Tibial artery (tissue), 4 donors: ENCODE measurements at regions of chr7 and their contacts with region 1.

Region 1: DNA sequence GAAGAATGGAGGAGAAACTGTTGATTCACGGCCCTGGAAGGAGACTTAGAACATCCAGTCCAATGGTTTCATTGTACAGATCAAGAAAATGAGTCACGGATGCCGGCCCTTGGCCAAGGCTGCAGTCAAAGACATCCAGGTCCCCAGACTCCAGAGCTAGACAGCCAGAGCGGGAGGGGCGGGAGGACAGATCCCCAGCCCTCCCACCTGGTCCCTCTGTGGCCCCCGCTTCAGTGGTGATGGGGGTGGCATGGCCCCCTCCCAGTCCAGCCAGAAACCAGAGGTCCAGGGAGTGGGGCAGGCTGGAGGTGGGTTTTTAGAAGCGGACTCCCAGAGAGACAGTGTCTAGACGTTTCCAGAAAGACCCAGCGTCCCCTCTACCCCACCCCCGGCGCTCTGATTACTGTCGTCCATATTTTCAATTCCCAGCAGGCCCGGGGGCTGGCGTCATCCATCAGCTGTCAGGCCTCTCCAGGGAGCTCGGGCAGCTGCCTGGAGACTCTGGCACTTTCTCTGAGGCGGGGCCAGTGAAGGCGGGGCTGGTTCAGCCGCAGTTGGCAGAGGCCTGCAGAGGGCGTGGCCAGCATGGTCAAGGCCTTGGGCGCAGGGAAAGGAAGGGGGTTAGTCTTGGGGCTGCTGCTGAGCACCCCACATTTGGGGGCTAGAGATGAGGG is 8.0 kb upstream of the HSPB1 start:
- DNase-seq: peak; percentile 98 to 99
- H3K4me3 ChIP-seq: peak overlapping the region; percentile 39 to 45
- H3K27ac ChIP-seq: peak overlapping the region; percentile 95 to 100
- H3K4me1 ChIP-seq: peaks cover 27 to 77% (median 58%) of the 10 kb centered on the region in 4 donors
- H3K27me3 ChIP-seq: no peaks in the 10 kb centered on the region
- CTCF ChIP-seq: peak in 1 of 2 experiments; percentile 6

Region 2: GRCh38 chr7:76314042-76314721 is 19.7 kb after region 1 on chr7:
- intact Hi-C with region 1: loop called (anchors 1 kb)
- DNase-seq: peak; percentile 96 to 97
- H3K4me3 ChIP-seq: no peak overlapping the region
- H3K27ac ChIP-seq: peak overlapping the region; percentile 18 to 37
- H3K4me1 ChIP-seq: peaks cover 0 to 33% (median 21%) of the 10 kb centered on the region in 4 donors
- H3K27me3 ChIP-seq: no peaks in the 10 kb centered on the region
- CTCF ChIP-seq: peak; percentile 100